ENCODE measurements at regions of chr5 and their contacts with region 1.

Region 1: GRCh38 chr5:33369485-33370472 is 71.0 kb upstream of the TARS1 start:
- DNase-seq: peak; percentile 92
- H3K4me3 ChIP-seq: no peak overlapping the region
- H3K27ac ChIP-seq: peak overlapping the region; percentile 69
- H3K4me1 ChIP-seq: peaks cover 20% of the 10 kb centered on the region
- H3K27me3 ChIP-seq: no peaks in the 10 kb centered on the region
- CTCF ChIP-seq: no peak
- POLR2A ChIP-seq: no peak

Region 2: DNA sequence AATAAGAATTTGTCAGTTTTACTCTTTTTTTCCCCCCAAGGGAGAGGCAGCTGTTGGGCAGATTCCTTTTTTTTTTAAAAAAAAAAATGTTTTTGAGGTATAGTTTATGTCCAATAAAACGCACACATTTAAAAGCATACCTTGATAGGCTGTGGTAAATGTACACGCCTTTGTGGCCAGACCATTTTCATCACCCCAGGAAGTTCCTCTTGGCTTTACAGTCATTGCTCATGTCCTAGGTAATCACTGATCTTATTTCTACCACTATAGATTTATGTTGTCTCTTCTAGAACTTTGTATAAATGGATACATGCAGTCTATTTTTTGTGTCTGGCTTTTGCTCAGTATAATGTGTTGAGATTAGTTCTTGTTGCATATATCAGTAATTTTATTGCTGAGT is 774.7 kb before region 1 on chr5:
- CTCF ChIA-PET with region 1: no interaction called
- POLR2A ChIA-PET with region 1: no interaction called
- dilution Hi-C with region 1: no loop called
- intact Hi-C with region 1: loop called (anchors 5 kb)
- DNase-seq: no peak
- H3K4me3 ChIP-seq: no peak overlapping the region
- H3K27ac ChIP-seq: no peak overlapping the region
- H3K4me1 ChIP-seq: peaks cover 40% of the 10 kb centered on the region
- H3K27me3 ChIP-seq: no peaks in the 10 kb centered on the region
- CTCF ChIP-seq: no peak
- POLR2A ChIP-seq: no peak

Region 3: GRCh38 chr5:33049845-33050244 is 319.9 kb before region 1 on chr5:
- CTCF ChIA-PET with region 1: no interaction called
- POLR2A ChIA-PET with region 1: no interaction called
- dilution Hi-C with region 1: no loop called
- intact Hi-C with region 1: loop called (anchors 5 kb)
- DNase-seq: peak; percentile 62
- H3K4me3 ChIP-seq: no peak overlapping the region
- H3K27ac ChIP-seq: peak overlapping the region; percentile 48
- H3K4me1 ChIP-seq: peaks cover 24% of the 10 kb centered on the region
- H3K27me3 ChIP-seq: no peaks in the 10 kb centered on the region
- CTCF ChIP-seq: no peak
- POLR2A ChIP-seq: no peak

Region 4: DNA sequence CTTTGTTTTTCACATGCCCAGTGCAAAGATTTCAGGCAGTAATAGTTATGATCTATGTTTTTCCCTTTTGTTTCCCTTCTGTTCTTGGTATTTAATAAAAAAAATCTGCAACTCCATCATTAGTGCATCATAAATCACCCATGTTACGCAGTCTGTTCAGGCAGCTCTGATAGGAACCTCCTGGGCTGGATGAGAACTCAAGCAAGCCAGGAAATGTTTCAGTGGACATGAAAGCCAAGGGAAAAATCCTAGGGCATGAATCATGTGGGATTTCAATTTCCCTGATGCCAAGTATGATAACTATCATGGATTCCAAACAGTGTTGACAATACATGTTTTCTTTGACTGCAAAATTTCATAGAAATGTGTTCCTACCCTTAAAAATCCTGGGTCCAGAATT is 48.8 kb before region 1 on chr5:
- CTCF ChIA-PET with region 1: interaction called, 3 read pairs
- POLR2A ChIA-PET with region 1: no interaction called
- dilution Hi-C with region 1: no loop called
- intact Hi-C with region 1: loop called (anchors 1 kb)
- DNase-seq: peak; percentile 98
- H3K4me3 ChIP-seq: peak overlapping the region in 1 of 3 experiments; percentile 13
- H3K27ac ChIP-seq: peak overlapping the region; percentile 98
- H3K4me1 ChIP-seq: peaks cover 34% of the 10 kb centered on the region
- H3K27me3 ChIP-seq: no peaks in the 10 kb centered on the region
- CTCF ChIP-seq: no peak
- POLR2A ChIP-seq: no peak

Region 5: DNA sequence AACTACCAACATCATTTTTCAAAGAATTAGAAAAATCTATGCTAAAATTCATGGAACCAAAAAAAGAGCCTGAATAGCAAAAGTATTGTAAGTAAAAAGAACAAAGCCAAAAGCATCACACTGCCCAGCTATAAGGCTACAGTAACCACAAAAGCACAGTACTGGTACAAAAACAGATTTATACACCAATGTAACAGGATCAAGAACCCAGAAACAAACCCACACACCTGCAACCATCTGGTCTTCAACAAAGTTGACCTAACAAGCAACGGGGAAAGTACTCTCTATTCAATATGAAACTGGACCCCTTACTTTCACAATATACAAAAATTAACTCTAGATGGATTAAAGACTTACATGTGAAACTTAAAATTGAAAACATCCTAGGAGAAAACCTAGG is 23.2 kb before region 1 on chr5:
- CTCF ChIA-PET with region 1: no interaction called
- POLR2A ChIA-PET with region 1: no interaction called
- dilution Hi-C with region 1: no loop called
- intact Hi-C with region 1: no loop called
- DNase-seq: no peak
- H3K4me3 ChIP-seq: no peak overlapping the region
- H3K27ac ChIP-seq: no peak overlapping the region
- H3K4me1 ChIP-seq: no peaks in the 10 kb centered on the region
- H3K27me3 ChIP-seq: no peaks in the 10 kb centered on the region
- CTCF ChIP-seq: no peak
- POLR2A ChIP-seq: no peak

Region 6: GRCh38 chr5:33401482-33402390 is 32.0 kb after region 1 on chr5:
- CTCF ChIA-PET with region 1: no interaction called
- POLR2A ChIA-PET with region 1: no interaction called
- dilution Hi-C with region 1: no loop called
- intact Hi-C with region 1: loop called (anchors 1 kb)
- DNase-seq: peak; percentile 74
- H3K4me3 ChIP-seq: no peak overlapping the region
- H3K27ac ChIP-seq: peak overlapping the region; percentile 60
- H3K4me1 ChIP-seq: peaks cover 27% of the 10 kb centered on the region
- H3K27me3 ChIP-seq: no peaks in the 10 kb centered on the region
- CTCF ChIP-seq: no peak
- POLR2A ChIP-seq: no peak

Measured in endothelial cell of umbilical vein (primary cell).